Activated B cell treated with CpG ODN at 0.5 μM for 24 hours (primary cell): ENCODE measurements at regions of chr5 and their contacts with region 1.

Region 1: GRCh38 chr5:151213800-151214613 is 9.9 kb downstream of the CCDC69 start:
- DNase-seq: peak; percentile 62
- ATAC-seq: peak; percentile 72
- H3K4me3 Mint-ChIP-seq: peak overlapping the region; percentile 66
- H3K27ac Mint-ChIP-seq: peak overlapping the region; percentile 94
- H3K4me1 Mint-ChIP-seq: peaks cover 96% of the 10 kb centered on the region
- H3K27me3 Mint-ChIP-seq: no peaks in the 10 kb centered on the region
- CTCF ChIP-seq: no peak

Region 2: DNA sequence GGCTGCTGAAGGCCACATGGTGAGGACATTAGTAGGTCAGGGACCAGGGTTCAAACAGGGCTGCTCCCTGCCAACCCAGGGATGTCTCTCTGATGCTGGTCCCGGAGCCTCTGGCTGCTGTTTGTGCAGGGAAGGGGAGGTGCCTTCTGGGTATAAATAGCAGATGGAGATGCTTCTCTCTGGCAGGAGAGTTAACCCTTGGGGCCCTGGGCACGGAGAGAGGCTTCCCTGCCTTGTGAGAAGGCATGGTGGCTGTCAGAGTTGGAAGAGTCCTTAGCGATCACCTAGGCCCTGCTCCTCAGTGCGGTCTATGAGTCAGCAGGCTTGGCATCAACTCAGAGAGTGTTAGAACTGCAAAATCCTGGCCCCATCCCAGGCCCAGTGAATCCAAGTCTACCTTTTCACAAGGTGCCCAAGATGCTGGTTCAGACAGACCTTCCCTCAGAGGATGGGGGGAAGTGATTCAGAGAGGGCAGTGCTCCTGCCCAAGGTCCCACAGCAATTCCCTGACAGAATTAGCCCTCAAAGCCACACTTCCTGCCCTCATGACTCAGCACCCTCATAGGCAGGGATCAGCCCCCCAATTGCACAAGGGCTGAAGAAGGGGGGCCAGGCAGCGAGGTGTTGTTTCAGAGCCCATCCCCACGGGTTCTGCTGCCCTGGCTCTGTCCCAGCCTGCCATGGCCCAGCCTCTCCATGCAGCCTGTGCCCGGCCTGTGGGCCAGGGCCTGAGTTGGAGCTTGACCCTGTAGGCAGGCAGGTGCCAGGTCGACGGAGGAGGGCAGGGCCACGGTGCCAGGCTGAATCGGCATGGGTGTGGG is 950.0 kb before region 1 on chr5:
- CTCF ChIA-PET with region 1: no interaction called
- POLR2A ChIA-PET with region 1: no interaction called
- intact Hi-C with region 1: no loop called
- DNase-seq: no peak
- ATAC-seq: no peak
- H3K4me3 Mint-ChIP-seq: no peak overlapping the region
- H3K27ac Mint-ChIP-seq: no peak overlapping the region
- H3K4me1 Mint-ChIP-seq: no peaks in the 10 kb centered on the region
- H3K27me3 Mint-ChIP-seq: no peaks in the 10 kb centered on the region
- CTCF ChIP-seq: no peak

Region 3: DNA sequence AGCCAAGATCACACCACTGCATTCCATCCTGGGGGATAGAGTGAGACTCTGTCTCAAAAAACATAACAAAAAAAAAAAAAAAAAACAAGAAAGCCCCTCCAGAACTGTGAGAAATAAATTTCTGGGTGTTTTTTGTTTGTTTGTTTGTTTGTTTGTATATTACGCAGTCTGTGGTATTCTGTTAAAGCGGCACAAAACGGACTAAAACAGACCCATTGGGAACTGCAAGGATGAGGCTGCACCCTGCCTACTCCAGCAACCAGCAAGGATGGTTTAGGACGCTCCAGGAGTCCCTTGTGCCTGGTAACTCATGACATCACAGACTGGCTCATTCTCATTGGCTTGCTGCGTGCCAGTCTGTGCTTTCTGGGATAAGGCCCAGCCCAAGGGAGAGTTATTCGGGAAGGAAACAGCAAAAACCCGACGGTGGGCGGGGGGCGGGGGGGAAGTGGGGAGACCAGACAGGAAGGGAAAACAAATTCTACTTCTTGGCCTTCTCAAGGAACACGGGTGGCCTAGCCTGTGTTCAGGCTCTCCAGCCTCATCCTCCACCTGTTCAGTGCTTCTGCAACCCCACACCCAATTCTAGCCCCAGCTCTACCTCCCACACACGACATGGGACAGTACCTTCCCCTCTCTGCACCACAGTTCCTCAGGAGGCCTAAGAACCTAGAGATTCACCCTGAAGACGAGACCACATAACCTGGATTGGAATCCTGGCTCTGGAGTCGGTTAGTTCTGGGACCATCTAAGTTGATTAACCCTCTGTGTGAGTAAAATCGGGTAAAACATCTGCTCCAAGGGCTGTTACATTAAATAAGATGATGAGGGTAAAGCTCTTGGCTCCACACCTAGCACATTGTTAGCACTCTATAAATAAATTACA is 804.1 kb before region 1 on chr5:
- CTCF ChIA-PET with region 1: no interaction called
- POLR2A ChIA-PET with region 1: interaction called, 3 read pairs
- intact Hi-C with region 1: loop called (anchors 5 kb)
- DNase-seq: no peak
- ATAC-seq: no peak
- H3K4me3 Mint-ChIP-seq: peak overlapping the region; percentile 98
- H3K27ac Mint-ChIP-seq: peak overlapping the region; percentile 100
- H3K4me1 Mint-ChIP-seq: peaks cover 65% of the 10 kb centered on the region
- H3K27me3 Mint-ChIP-seq: peaks cover 2% of the 10 kb centered on the region
- CTCF ChIP-seq: no peak

Region 4: GRCh38 chr5:151080623-151081430 is 133.2 kb before region 1 on chr5 and contains the start of gene TNIP1:
- CTCF ChIA-PET with region 1: no interaction called
- POLR2A ChIA-PET with region 1: interaction called, 14 read pairs
- intact Hi-C with region 1: no loop called
- DNase-seq: peak; percentile 99
- ATAC-seq: peak; percentile 81
- H3K4me3 Mint-ChIP-seq: peak within 1 kb of the TSS; percentile 93
- H3K27ac Mint-ChIP-seq: peak within 1 kb of the TSS; percentile 94
- H3K4me1 Mint-ChIP-seq: peaks cover 88% of the 10 kb centered on the region
- H3K27me3 Mint-ChIP-seq: no peaks in the 10 kb centered on the region
- CTCF ChIP-seq: no peak
- total RNA-seq, gene TNIP1: 506 and 512 TPM in 2 replicates

Region 5: DNA sequence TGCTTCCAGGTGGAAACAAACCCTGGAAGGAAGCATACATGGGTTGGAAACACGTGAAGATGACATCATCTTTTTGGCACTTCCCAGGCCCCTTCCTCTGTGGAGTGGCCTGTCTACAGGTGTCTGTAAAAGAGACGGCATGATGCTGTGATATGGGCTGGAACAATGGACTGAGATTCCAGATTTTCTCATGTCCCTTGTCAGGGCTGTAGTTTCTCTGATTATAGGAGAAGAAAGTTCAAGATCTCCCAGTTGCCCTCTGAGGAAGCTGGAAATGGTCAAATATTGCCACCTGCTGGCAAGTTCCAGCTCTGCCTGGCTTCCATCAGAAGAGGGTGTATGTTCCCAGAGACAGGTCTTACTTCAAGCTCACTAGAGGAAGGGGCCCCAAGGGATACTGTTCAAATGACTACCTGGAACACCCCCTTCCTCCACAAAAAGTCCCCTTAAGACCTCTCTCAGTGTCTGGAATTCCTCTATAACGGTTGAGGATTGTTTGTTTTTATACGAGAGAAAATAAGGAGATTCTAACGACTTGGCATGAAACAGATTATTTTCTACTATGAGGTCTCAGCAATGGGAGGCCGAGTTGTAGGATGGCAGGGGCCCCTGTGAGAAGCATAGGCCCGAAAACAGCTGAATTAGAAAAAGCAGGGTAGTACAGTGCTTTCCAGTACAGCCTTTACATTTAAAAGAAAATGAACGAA is 49.2 kb before region 1 on chr5:
- CTCF ChIA-PET with region 1: interaction called, 24 read pairs
- POLR2A ChIA-PET with region 1: interaction called, 15 read pairs
- intact Hi-C with region 1: no loop called
- DNase-seq: peak; percentile 59
- ATAC-seq: peak; percentile 97
- H3K4me3 Mint-ChIP-seq: no peak overlapping the region
- H3K27ac Mint-ChIP-seq: peak overlapping the region; percentile 65
- H3K4me1 Mint-ChIP-seq: peaks cover 39% of the 10 kb centered on the region
- H3K27me3 Mint-ChIP-seq: no peaks in the 10 kb centered on the region
- CTCF ChIP-seq: peak; percentile 72

Region 6: GRCh38 chr5:151196556-151197290 is 17.3 kb before region 1 on chr5:
- CTCF ChIA-PET with region 1: interaction called, 4 read pairs
- POLR2A ChIA-PET with region 1: interaction called, 43 read pairs
- intact Hi-C with region 1: loop called (anchors 1 kb)
- DNase-seq: peak; percentile 31
- ATAC-seq: peak; percentile 95
- H3K4me3 Mint-ChIP-seq: peak overlapping the region; percentile 29
- H3K27ac Mint-ChIP-seq: peak overlapping the region; percentile 84
- H3K4me1 Mint-ChIP-seq: peaks cover 75% of the 10 kb centered on the region
- H3K27me3 Mint-ChIP-seq: no peaks in the 10 kb centered on the region
- CTCF ChIP-seq: no peak

Region 7: GRCh38 chr5:151233616-151234085 is 19.6 kb after region 1 on chr5:
- CTCF ChIA-PET with region 1: interaction called, 17 read pairs
- POLR2A ChIA-PET with region 1: interaction called, 104 read pairs
- intact Hi-C with region 1: loop called (anchors 1 kb)
- DNase-seq: no peak
- ATAC-seq: peak; percentile 33
- H3K4me3 Mint-ChIP-seq: peak overlapping the region; percentile 62
- H3K27ac Mint-ChIP-seq: peak overlapping the region; percentile 89
- H3K4me1 Mint-ChIP-seq: peaks cover 82% of the 10 kb centered on the region
- H3K27me3 Mint-ChIP-seq: no peaks in the 10 kb centered on the region
- CTCF ChIP-seq: no peak

Region 8: DNA sequence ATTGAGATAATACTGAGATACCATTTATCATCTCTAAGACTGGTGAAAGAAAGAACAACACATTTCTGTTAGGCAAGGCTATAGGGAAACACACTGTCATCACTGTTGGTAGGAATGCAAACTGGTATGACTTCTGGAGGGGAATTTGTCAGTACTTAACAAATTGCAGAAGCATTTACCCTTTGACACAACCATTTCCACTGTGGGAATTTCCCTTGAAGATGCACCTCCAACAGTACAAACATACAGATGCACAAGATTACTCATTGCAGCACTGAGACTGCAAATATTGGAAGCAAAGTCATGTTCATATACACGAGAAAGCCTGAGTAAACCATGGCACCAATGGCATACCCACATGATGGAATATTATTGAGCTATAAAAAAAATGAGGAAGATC is 56.6 kb after region 1 on chr5:
- CTCF ChIA-PET with region 1: no interaction called
- POLR2A ChIA-PET with region 1: no interaction called
- intact Hi-C with region 1: loop called (anchors 1 kb)
- DNase-seq: no peak
- ATAC-seq: peak; percentile 95
- H3K4me3 Mint-ChIP-seq: no peak overlapping the region
- H3K27ac Mint-ChIP-seq: no peak overlapping the region
- H3K4me1 Mint-ChIP-seq: peaks cover 3% of the 10 kb centered on the region
- H3K27me3 Mint-ChIP-seq: no peaks in the 10 kb centered on the region
- CTCF ChIP-seq: no peak